Mammary epithelial cell (primary cell): ENCODE measurements at regions of chr9 and their contacts with region 1.

Region 1: GRCh38 chr9:21677834-21678233 is 124.6 kb upstream of the MTAP start:
- DNase-seq: peak; percentile 97
- H3K4me3 ChIP-seq: peak overlapping the region in 2 of 3 experiments; percentile 25 to 45
- H3K27ac ChIP-seq: peak overlapping the region; percentile 99
- H3K4me1 ChIP-seq: peaks cover 70% of the 10 kb centered on the region
- H3K27me3 ChIP-seq: no peaks in the 10 kb centered on the region
- CTCF ChIP-seq: no peak

Region 2: GRCh38 chr9:21294325-21294724 is 383.5 kb before region 1 on chr9:
- CTCF ChIA-PET with region 1: no interaction called
- dilution Hi-C with region 1: no loop called
- in situ Hi-C with region 1: no loop called
- intact Hi-C with region 1: no loop called
- DNase-seq: peak; percentile 98
- H3K4me3 ChIP-seq: no peak overlapping the region
- H3K27ac ChIP-seq: peak overlapping the region; percentile 19
- H3K4me1 ChIP-seq: peaks cover 17% of the 10 kb centered on the region
- H3K27me3 ChIP-seq: no peaks in the 10 kb centered on the region
- CTCF ChIP-seq: no peak

Region 3: GRCh38 chr9:21549251-21549765 is 128.5 kb before region 1 on chr9:
- CTCF ChIA-PET with region 1: interaction called, 12 read pairs
- dilution Hi-C with region 1: no loop called
- in situ Hi-C with region 1: loop called in 1 of 2 experiments (anchors 10 kb)
- intact Hi-C with region 1: no loop called
- DNase-seq: peak; percentile 83
- H3K4me3 ChIP-seq: peak overlapping the region; percentile 18 to 90 (median 30)
- H3K27ac ChIP-seq: peak overlapping the region; percentile 99
- H3K4me1 ChIP-seq: peaks cover 69% of the 10 kb centered on the region
- H3K27me3 ChIP-seq: no peaks in the 10 kb centered on the region
- CTCF ChIP-seq: no peak

Region 4: DNA sequence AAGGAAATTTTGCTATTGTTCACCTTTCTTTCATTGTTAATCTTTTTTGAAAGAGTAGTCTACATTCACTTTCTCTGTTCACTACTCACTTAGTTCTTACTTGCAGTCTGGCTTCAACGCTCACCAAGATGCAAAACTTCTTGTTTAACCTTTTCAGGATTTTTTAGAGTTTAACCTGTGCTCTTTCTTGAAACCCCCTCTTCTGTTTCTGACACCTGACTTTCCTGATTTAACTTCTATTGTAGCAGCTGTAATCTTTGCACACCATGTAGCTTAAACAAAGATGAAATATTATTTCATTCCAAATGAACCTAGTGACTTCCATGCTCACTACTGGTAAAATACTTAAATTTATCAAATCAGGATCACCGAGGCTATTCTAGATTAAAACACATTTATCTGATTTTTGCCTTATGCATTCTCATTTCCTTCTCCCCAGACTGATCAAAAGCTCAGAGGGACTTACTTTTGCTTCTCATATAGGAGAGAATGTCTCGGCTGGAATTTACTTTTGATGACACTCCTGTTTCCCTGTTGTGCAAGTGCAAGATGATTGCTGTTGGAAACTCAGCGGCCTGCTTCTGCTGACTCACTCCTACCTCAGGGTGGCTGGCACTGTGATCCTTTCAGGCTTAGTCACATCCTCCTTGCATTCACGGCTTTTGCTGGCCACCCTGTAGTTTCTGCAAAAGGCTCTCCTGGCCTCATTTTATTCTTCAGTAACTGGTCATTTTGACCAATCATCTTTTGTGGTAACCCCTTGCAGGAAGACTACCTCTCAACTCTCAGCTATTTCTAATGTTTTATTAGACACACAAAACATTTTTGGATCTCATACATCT is 86.4 kb before region 1 on chr9:
- CTCF ChIA-PET with region 1: no interaction called
- dilution Hi-C with region 1: no loop called
- in situ Hi-C with region 1: loop called in 1 of 2 experiments (anchors 10 kb)
- intact Hi-C with region 1: loop called (anchors 1 kb)
- DNase-seq: peak; percentile 97
- H3K4me3 ChIP-seq: peak overlapping the region; percentile 39 to 77 (median 57)
- H3K27ac ChIP-seq: peak overlapping the region; percentile 97
- H3K4me1 ChIP-seq: peaks cover 18% of the 10 kb centered on the region
- H3K27me3 ChIP-seq: no peaks in the 10 kb centered on the region
- CTCF ChIP-seq: no peak

Region 5: DNA sequence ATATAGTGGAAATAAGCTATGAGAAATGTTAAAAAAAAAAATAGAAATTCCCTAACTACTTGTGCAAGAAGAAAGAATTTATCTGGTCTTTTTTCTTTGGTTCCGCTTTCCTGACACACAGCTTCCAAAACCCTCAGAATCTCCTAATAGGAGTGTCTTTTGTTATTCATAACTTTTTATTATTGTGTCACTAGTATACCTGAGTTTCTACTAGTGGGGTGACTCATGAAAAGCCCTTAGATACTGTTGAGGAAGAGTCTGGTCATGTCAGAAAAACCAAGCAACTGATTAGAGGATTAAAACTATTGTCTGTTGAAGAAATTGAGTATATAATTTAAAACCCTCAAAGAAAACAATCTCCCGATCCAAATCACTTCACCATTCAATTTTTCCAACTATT is 42.9 kb before region 1 on chr9:
- CTCF ChIA-PET with region 1: no interaction called
- dilution Hi-C with region 1: no loop called
- in situ Hi-C with region 1: no loop called
- intact Hi-C with region 1: loop called (anchors 1 kb)
- DNase-seq: peak; percentile 88
- H3K4me3 ChIP-seq: no peak overlapping the region
- H3K27ac ChIP-seq: peak overlapping the region; percentile 74
- H3K4me1 ChIP-seq: peaks cover 11% of the 10 kb centered on the region
- H3K27me3 ChIP-seq: no peaks in the 10 kb centered on the region
- CTCF ChIP-seq: no peak